ENCODE measurements at regions of chr9 and their contacts with region 1.

Region 1: DNA sequence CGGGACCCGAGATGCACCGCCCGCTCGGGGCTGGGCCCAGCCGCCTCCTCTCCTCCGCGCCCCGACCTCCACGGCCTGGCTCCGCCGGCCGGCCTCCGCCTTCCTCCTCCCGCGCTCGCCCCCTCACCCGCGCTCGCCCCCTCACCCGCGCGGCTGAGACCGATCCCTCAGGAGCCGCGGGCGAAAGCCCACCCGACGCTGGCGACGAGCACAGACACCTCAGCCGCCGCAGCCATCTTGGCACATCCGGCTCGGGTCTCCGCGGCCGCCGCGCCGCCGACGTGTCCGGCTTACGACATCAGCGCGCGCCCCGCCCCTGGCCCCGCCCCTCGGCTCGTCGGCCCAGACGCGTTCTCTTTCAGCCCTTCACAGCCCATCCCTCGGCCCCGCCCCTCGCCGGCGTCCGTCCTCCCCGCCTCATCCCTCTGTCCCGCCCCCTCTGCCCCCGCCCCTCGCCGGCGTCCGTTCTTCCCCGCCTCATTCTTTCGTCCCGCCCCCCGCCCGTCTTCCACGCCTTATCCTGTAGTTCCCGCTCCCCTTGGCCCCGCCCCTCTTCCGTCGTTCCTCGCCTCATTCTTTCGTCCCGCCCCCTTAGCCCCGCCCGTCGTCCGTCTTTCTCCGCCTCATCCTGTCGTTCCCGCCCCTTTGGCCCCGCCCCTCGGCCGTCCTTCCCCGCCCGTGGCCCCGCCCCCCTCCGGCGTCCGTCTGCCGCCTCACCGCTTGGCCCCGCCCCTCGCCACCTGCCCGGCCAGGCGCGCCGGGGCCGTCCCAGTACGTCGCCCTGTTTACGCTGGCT is at the start of gene SEC16A:
- DNase-seq: peak; percentile 100
- H3K4me3 Mint-ChIP-seq: peak within 1 kb of the TSS; percentile 99
- H3K27ac Mint-ChIP-seq: peak within 1 kb of the TSS; percentile 99
- H3K4me1 Mint-ChIP-seq: peaks cover 35% of the 10 kb centered on the region
- H3K27me3 Mint-ChIP-seq: no peaks in the 10 kb centered on the region
- total RNA-seq, gene SEC16A: 44.1 to 47.3 TPM

Region 2: GRCh38 chr9:136109351-136110081 is 373.5 kb before region 1 on chr9:
- CTCF ChIA-PET with region 1: no interaction called
- intact Hi-C with region 1: loop called (anchors 1 kb)
- DNase-seq: peak; percentile 97
- H3K4me3 Mint-ChIP-seq: peak overlapping the region; percentile 83
- H3K27ac Mint-ChIP-seq: peak overlapping the region; percentile 97
- H3K4me1 Mint-ChIP-seq: peaks cover 74% of the 10 kb centered on the region
- H3K27me3 Mint-ChIP-seq: no peaks in the 10 kb centered on the region

Region 3: DNA sequence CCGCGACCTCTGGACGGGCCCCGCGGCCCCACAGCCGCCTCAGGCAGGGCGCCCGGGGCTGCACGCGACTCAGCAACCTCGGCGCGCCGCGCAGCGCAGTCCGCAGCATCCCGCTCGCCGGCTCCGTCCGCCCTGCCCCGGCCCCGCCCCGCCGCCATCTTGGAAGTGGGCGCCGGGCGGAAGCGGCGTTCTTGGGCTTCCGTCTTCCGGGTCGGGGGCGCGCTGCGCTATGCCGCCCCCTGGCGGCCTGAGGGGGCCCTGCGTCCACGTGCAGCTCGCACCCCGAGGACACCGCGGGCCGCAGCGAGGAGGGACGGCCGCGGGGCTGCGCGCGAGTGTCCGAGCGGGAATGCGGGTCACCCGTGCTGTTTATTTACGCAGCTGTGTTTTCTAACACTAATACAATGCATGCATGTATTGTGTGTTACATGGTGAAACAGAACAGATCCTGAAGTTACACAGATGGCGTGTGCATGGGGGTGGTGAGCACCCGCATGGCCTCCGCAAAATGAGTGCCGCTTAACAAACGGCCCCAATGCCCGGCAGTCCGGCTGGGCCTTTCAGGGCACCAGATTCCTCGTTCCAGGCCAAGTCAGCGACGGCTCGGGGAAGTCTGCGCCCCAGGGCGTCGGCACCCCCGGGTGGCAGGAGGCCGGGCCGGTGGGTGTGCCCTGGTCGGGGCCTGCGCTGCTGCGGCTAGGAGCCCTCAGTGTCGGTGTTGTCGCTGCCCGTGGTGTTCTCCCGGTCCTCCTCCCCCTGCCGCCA is 119.2 kb before region 1 on chr9 and contains the start of gene DNLZ:
- CTCF ChIA-PET with region 1: no interaction called
- intact Hi-C with region 1: loop called (anchors 1 kb)
- DNase-seq: peak; percentile 86
- H3K4me3 Mint-ChIP-seq: peak within 1 kb of the TSS; percentile 84
- H3K27ac Mint-ChIP-seq: peak within 1 kb of the TSS; percentile 89
- H3K4me1 Mint-ChIP-seq: peaks cover 5% of the 10 kb centered on the region
- H3K27me3 Mint-ChIP-seq: no peaks in the 10 kb centered on the region
- total RNA-seq, gene DNLZ: 9.9 to 12.0 TPM

Region 4: GRCh38 chr9:136545966-136546698 is 63.1 kb after region 1 on chr9 and contains the start of gene NOTCH1:
- CTCF ChIA-PET with region 1: no interaction called
- intact Hi-C with region 1: loop called (anchors 1 kb)
- DNase-seq: peak; percentile 88
- H3K4me3 Mint-ChIP-seq: peak within 1 kb of the TSS; percentile 94
- H3K27ac Mint-ChIP-seq: peak within 1 kb of the TSS; percentile 95
- H3K4me1 Mint-ChIP-seq: peaks cover 44% of the 10 kb centered on the region
- H3K27me3 Mint-ChIP-seq: no peaks in the 10 kb centered on the region
- total RNA-seq, gene NOTCH1: 71.4 to 80.2 TPM

Region 5: GRCh38 chr9:136700959-136701667 is 218.1 kb after region 1 on chr9:
- CTCF ChIA-PET with region 1: interaction called, 4 read pairs
- intact Hi-C with region 1: loop called (anchors 1 kb)
- DNase-seq: peak; percentile 93
- H3K4me3 Mint-ChIP-seq: peak overlapping the region; percentile 69
- H3K27ac Mint-ChIP-seq: peak overlapping the region; percentile 62
- H3K4me1 Mint-ChIP-seq: peaks cover 18% of the 10 kb centered on the region
- H3K27me3 Mint-ChIP-seq: peaks cover 9% of the 10 kb centered on the region

Region 6: DNA sequence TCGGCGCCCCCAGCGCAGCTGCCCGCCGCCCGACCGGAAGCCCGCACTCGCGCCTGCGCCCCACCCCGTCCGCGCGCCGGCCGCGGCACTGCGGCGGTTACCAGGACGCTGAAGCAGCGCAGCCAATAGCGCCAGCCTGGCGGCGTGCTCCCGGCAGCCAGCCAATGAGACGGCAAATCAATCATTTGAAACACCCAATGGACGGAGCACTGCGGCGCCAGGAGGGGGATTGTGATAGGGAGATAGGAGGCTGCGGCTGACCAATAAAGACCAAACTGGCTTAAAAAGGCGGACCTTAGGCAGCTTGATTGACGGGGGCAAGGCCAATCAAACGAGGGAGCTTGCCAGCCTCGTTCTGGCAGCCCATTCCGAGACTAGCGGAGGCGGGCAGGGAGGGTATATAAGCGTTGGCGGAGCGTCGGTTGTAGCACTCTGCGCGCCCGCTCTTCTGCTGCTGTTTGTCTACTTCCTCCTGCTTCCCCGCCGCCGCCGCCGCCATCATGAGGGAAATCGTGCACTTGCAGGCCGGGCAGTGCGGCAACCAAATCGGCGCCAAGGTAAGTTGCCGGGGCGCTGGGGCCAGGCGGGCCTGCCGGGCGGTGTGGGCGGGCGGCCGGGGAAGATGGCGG is 758.0 kb after region 1 on chr9 and contains the start of gene TUBB4B:
- CTCF ChIA-PET with region 1: no interaction called
- intact Hi-C with region 1: loop called (anchors 10 kb)
- DNase-seq: peak; percentile 99
- H3K4me3 Mint-ChIP-seq: peak within 1 kb of the TSS; percentile 88
- H3K27ac Mint-ChIP-seq: peak within 1 kb of the TSS; percentile 94
- H3K4me1 Mint-ChIP-seq: peaks cover 34% of the 10 kb centered on the region
- H3K27me3 Mint-ChIP-seq: no peaks in the 10 kb centered on the region
- total RNA-seq, gene TUBB4B: 193 to 196 TPM

Measured in activated naive CD4-positive, alpha-beta T cell treated with anti-CD3 and anti-CD28 coated beads for 36 hours (primary cell).